ENCODE measurements at regions of chr3 and their contacts with region 1.

Region 1: DNA sequence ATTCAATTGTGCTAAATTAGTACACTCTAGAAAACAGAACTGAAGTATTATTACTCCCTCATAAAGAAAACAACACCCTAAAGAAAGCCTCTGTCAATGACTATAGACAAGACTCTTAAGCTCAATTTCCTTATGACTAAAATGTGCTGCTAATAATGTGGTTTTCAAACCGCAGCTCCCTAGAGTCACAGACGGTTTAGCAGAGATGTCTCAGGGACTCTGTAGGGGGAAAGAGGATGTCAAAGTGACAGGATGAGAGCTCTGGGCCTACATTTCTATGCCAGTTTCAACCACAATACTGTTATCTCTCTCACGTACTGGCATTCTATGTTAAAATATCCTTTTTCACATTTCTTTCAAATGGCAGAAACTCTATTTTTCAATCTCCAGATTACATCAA is 37.6 kb upstream of the WDR49 start:
- DNase-seq: no peak
- H3K4me3 ChIP-seq: no peak overlapping the region
- H3K27ac ChIP-seq: no peak overlapping the region
- H3K4me1 ChIP-seq: no peaks in the 10 kb centered on the region
- H3K27me3 ChIP-seq: no peaks in the 10 kb centered on the region
- CTCF ChIP-seq: no peak
- POLR2A ChIP-seq: no peak

Region 2: GRCh38 chr3:167409611-167410010 is 281.8 kb before region 1 on chr3:
- intact Hi-C with region 1: loop called (anchors 5 kb)
- DNase-seq: no peak
- H3K4me3 ChIP-seq: no peak overlapping the region
- H3K27ac ChIP-seq: no peak overlapping the region
- H3K4me1 ChIP-seq: no peaks in the 10 kb centered on the region
- H3K27me3 ChIP-seq: no peaks in the 10 kb centered on the region
- CTCF ChIP-seq: no peak
- POLR2A ChIP-seq: no peak